OCI-LY7 (cell line): ENCODE measurements at regions of chr1 and their contacts with region 1.

Region 1: GRCh38 chr1:174451408-174451807 is 3.6 kb downstream of the GPR52 start:
- DNase-seq: no peak
- H3K4me3 ChIP-seq: no peak overlapping the region
- H3K27ac ChIP-seq: no peak overlapping the region
- H3K4me1 ChIP-seq: no peaks in the 10 kb centered on the region
- CTCF ChIP-seq: no peak

Region 2: GRCh38 chr1:174398246-174398645 is 53.2 kb before region 1 on chr1:
- CTCF ChIA-PET with region 1: no interaction called
- POLR2A ChIA-PET with region 1: no interaction called
- intact Hi-C with region 1: loop called (anchors 1 kb)
- DNase-seq: no peak
- H3K4me3 ChIP-seq: no peak overlapping the region
- H3K27ac ChIP-seq: no peak overlapping the region
- H3K4me1 ChIP-seq: no peaks in the 10 kb centered on the region
- CTCF ChIP-seq: no peak

Region 3: DNA sequence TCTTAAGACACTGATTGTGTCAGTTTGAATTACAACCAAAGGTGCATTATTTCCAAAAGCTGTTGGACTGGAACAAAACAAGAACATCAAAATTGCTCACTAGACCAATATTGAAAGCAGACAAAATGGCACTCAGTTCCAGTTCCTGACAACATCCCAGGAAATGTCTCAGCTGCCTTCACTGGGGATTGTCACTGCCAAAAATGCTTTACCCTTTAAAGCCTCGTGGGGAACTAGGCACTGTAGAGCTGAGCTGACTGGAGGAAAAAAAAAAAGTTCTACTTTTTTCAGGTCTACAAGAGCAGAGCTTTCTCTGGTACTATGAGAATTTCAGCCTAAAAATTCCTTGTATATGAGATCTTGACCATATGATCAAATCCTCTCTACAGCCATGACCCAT is 18.3 kb after region 1 on chr1:
- CTCF ChIA-PET with region 1: no interaction called
- POLR2A ChIA-PET with region 1: interaction called, 13 read pairs
- intact Hi-C with region 1: no loop called
- DNase-seq: no peak
- H3K4me3 ChIP-seq: no peak overlapping the region
- H3K27ac ChIP-seq: no peak overlapping the region
- H3K4me1 ChIP-seq: no peaks in the 10 kb centered on the region
- CTCF ChIP-seq: no peak

Region 4: DNA sequence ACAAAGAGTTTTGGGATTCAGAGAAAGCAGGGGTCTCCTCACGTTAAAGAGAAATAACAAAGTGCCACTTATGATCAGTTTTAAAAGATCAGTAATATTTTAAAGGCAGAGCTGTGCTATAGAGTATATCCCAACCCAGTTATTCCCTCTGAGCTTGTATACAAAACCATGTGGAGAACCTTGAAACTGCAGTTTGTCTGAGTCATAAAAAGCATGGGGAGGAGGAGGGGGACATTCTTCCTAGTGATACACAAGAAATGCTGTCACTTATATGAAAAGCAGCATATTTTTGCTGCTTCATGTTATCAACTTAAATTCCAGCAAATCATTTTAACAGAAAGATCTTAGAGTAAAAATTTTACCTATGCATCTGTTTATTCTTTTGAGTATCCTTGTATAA is 240.9 kb after region 1 on chr1:
- CTCF ChIA-PET with region 1: no interaction called
- POLR2A ChIA-PET with region 1: no interaction called
- intact Hi-C with region 1: no loop called
- DNase-seq: no peak
- H3K4me3 ChIP-seq: no peak overlapping the region
- H3K27ac ChIP-seq: no peak overlapping the region
- H3K4me1 ChIP-seq: no peaks in the 10 kb centered on the region
- CTCF ChIP-seq: no peak